ENCODE measurements at regions of chr14 and their contacts with region 1.

Region 1: DNA sequence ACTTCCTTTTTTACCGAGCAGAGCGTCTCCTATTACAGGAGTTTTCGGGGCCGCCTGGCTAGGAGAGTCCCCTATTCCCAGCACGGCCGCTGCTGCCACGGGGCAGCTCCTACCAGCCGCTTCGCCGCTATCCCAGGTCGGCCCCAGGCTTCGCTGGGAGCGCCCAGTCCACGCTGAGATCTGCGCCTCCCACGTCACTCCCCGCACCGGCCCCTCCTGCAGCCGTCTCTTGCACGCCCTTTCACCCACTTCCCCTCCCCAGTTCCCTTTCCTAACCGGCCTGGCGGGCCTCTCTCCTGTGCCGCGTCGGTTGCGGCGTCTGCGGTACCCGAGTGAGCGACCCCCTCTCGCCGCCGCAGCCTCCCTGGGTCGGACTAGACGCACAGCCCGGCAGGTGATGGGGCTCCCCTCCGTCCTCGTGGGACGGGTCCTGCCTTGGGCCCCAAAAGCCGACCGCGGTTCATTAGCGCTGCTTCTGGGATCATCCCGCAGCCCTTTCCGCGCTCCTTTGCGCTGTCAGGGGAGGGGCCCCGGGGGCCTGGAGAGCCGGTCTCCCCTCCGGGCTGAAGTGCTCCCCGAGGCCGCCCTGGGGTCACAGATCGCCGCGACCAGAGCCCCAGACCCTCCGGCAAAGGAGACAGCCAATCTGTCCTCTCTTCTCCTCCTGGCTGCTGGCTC is 1318.4 kb downstream of the TMEM121 start:
- DNase-seq: peak; percentile 39
- H3K4me3 Mint-ChIP-seq: peak overlapping the region; percentile 90
- H3K27ac Mint-ChIP-seq: peak overlapping the region; percentile 56
- H3K4me1 Mint-ChIP-seq: peaks cover 28% of the 10 kb centered on the region
- H3K27me3 Mint-ChIP-seq: peaks cover 39% of the 10 kb centered on the region

Region 2: GRCh38 chr14:106631879-106632278 is 212.9 kb before region 1 on chr14:
- intact Hi-C with region 1: no loop called
- DNase-seq: no peak
- H3K4me3 Mint-ChIP-seq: no peak overlapping the region
- H3K27ac Mint-ChIP-seq: no peak overlapping the region
- H3K4me1 Mint-ChIP-seq: no peaks in the 10 kb centered on the region
- H3K27me3 Mint-ChIP-seq: peaks cover 23% of the 10 kb centered on the region

Region 3: DNA sequence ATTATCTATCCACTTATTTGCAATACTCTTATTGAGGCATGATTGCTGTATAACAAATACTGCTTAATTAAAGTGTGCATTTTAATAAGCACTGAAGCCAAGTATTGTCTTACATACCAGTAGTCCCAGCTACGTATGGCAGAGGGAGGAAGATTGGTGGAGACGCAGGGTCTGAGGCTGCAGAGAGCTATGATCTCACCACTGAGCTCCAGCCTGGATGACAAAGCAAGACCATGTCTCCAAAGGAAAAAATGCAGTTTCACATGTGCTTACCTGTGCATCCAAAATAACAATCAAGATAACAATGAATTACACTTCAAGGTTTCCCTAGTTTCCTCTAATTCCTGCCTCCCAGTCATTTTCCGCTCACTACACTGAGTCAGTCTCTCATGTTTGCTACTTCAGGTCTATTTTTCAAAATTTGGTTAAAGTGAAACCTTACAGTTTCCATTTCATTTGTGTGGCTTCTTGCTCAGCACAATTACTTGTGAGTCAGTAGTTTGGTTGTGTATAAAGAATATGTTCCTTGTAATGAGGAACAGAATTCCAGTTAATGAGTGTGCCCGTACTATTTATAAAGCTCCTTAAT is 68.3 kb before region 1 on chr14:
- intact Hi-C with region 1: loop called (anchors 2 kb)
- DNase-seq: no peak
- H3K4me3 Mint-ChIP-seq: no peak overlapping the region
- H3K27ac Mint-ChIP-seq: no peak overlapping the region
- H3K4me1 Mint-ChIP-seq: peaks cover 11% of the 10 kb centered on the region
- H3K27me3 Mint-ChIP-seq: peaks cover 2% of the 10 kb centered on the region

Region 4: GRCh38 chr14:106872611-106873446 is 28.1 kb after region 1 on chr14:
- intact Hi-C with region 1: loop called (anchors 1 kb)
- DNase-seq: peak; percentile 73
- H3K4me3 Mint-ChIP-seq: peak overlapping the region; percentile 27
- H3K27ac Mint-ChIP-seq: no peak overlapping the region
- H3K4me1 Mint-ChIP-seq: peaks cover 18% of the 10 kb centered on the region
- H3K27me3 Mint-ChIP-seq: peaks cover 18% of the 10 kb centered on the region